Testis (tissue), 5 donors: ENCODE measurements at regions of chr3 and their contacts with region 1.

Region 1: GRCh38 chr3:194344012-194344411 is 7.1 kb downstream of the CPN2 start:
- DNase-seq: peak; percentile 88
- H3K4me3 ChIP-seq: no peak overlapping the region
- H3K27ac ChIP-seq: no peak overlapping the region
- H3K4me1 ChIP-seq: no peaks in the 10 kb centered on the region
- H3K27me3 ChIP-seq: no peaks in the 10 kb centered on the region
- CTCF ChIP-seq: peak; percentile 33 to 92 (median 70)
- POLR2A ChIP-seq: no peak

Region 2: DNA sequence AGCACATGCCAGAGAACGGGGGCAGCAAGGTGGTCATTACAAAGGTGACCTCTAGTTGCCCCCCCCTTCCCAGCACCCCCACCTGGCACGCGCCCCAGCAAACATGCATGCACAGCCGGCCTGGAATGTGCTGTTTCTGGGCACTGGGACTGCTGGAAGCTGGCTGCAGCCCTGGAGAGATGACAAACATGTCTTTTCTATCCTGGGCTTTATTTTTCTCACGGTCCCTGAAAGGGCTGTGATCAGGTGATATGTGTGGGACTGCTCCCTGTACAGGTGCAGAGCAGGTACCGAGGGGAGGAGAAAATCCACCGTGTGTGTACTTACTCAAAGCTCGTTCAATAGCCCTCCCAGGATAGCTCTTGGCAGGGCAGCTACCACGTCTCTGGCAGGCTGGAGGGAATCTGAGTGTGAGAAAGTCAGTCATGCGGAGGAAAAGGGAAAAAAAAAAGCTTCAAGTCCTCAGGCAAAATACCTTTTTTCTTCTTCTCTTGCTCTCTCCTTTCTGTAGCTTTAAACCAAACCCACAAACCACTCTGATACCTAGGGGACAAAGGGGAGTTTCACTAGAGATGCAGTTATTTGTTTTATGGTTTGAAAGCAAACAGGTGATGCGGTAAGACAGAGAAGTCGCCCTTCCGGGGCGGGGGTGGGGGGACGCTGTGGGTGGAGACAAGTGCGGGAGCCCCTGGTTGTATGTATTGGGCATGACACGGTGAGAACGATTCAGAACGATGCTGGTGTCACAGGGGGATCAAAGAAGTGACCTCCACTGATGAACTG is 213.0 kb before region 1 on chr3:
- intact Hi-C with region 1: no loop called
- DNase-seq: no peak
- H3K4me3 ChIP-seq: no peak overlapping the region
- H3K27ac ChIP-seq: no peak overlapping the region
- H3K4me1 ChIP-seq: peaks cover 39% of the 10 kb centered on the region
- H3K27me3 ChIP-seq: no peaks in the 10 kb centered on the region
- CTCF ChIP-seq: no peak
- POLR2A ChIP-seq: no peak

Region 3: DNA sequence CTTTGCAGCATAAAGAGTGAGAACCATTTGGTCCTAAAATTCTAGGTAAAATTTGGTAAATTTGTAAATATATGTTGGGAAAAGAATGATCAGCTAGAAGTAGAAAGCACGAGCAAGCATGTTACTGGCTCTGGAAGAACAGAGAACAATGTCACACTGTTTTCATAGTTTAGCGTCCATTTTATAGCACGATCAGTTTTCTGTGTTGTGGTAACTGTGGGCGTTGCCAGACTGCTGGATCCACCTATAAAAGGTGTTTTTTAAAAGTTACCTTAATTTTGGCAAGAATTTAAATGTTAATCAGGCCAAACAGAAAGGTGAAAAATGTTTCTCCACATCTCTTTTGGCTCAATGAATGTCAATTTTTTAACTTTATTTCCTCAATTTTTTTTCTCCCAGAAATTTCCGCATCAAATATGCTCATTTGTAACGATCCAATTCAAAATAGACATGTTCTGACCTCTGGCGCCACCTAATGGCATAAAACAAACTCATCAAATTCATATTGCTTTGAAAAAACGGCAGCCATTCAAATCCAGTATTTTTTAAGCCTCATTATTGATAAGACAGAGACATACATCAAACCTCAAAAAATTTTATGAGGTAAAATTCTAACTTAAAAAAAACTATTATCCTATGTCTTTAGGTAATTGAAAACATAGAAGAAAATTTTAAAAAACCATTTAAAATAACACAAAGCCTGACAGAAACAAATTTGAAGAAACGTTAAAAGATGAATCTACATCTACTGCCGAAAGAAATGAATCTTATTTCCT is 60.5 kb after region 1 on chr3:
- intact Hi-C with region 1: loop called (anchors 5 kb)
- DNase-seq: peak; percentile 56
- H3K4me3 ChIP-seq: no peak overlapping the region
- H3K27ac ChIP-seq: no peak overlapping the region
- H3K4me1 ChIP-seq: no peaks in the 10 kb centered on the region
- H3K27me3 ChIP-seq: no peaks in the 10 kb centered on the region
- CTCF ChIP-seq: peak; percentile 46 to 84 (median 52)
- POLR2A ChIP-seq: no peak

Region 4: GRCh38 chr3:194604834-194605233 is 260.8 kb after region 1 on chr3:
- intact Hi-C with region 1: loop called (anchors 10 kb)
- DNase-seq: no peak
- H3K4me3 ChIP-seq: no peak overlapping the region
- H3K27ac ChIP-seq: no peak overlapping the region
- H3K4me1 ChIP-seq: no peaks in the 10 kb centered on the region
- H3K27me3 ChIP-seq: no peaks in the 10 kb centered on the region
- CTCF ChIP-seq: no peak
- POLR2A ChIP-seq: no peak